ENCODE measurements at regions of chr7 and their contacts with region 1.

Region 1: GRCh38 chr7:76333511-76334101 is 25.2 kb downstream of the YWHAG start:
- DNase-seq: no peak
- H3K4me3 ChIP-seq: no peak overlapping the region
- H3K27ac ChIP-seq: peak overlapping the region; percentile 9 to 10
- H3K4me1 ChIP-seq: peaks cover 17 to 50% (median 42%) of the 10 kb centered on the region in 4 experiments
- H3K27me3 ChIP-seq: no peaks in the 10 kb centered on the region

Region 2: DNA sequence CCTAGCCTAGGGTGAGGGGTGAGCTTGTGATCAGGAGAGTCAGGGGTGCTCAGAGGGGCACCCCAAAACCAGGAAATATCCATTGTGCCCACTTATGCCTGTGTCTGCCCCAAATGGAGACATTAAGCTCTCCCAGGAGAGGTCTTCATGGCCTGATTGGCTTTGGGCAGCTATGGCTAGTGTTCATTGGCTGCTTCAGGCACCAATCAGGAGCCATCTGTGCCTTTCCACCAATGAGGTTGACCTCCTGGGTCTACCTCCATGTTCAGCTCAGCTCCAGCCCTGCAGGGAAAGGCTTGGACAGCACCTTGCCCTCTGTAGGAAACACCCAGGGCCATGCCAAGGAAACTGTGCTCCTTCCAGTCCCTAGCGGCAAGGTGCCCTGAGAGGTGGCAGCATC is 55.1 kb before region 1 on chr7:
- CTCF ChIA-PET with region 1: no interaction called
- POLR2A ChIA-PET with region 1: no interaction called
- DNase-seq: no peak
- H3K4me3 ChIP-seq: no peak overlapping the region
- H3K27ac ChIP-seq: no peak overlapping the region
- H3K4me1 ChIP-seq: peaks cover 0 to 18% (median 15%) of the 10 kb centered on the region in 4 experiments
- H3K27me3 ChIP-seq: peaks cover 0 to 50% (median 19%) of the 10 kb centered on the region in 5 experiments

Region 3: DNA sequence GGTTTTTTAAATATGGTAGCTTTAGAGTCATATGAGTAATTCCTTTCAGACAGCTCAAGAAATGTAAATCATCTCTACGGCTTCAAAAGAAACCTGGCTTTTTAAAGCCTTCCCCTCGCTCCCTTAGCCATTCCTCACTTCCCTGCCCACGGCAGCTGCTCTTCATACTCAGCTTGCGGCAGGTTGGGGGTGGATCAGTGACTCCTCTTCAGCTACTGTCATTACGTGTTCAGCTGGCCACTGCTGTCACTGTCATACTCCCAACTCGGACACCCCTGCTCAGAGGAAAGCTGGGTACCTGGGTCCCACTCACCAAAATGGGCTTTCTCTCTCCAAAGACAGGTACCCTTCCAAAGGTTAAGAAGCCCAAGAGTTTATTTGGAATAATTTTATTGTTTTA is 18.6 kb after region 1 on chr7:
- CTCF ChIA-PET with region 1: interaction called, 74 read pairs
- POLR2A ChIA-PET with region 1: no interaction called
- DNase-seq: no peak
- H3K4me3 ChIP-seq: no peak overlapping the region
- H3K27ac ChIP-seq: no peak overlapping the region
- H3K4me1 ChIP-seq: peaks cover 5 to 13% (median 11%) of the 10 kb centered on the region in 4 experiments
- H3K27me3 ChIP-seq: no peaks in the 10 kb centered on the region

Region 4: GRCh38 chr7:76359111-76359978 is 25.7 kb after region 1 on chr7:
- CTCF ChIA-PET with region 1: interaction called, 74 read pairs
- POLR2A ChIA-PET with region 1: interaction called, 3 read pairs
- DNase-seq: peak; percentile 99
- H3K4me3 ChIP-seq: peak overlapping the region; percentile 90 to 98 (median 97)
- H3K27ac ChIP-seq: peak overlapping the region; percentile 94 to 98
- H3K4me1 ChIP-seq: peaks cover 9 to 40% (median 29%) of the 10 kb centered on the region in 4 experiments
- H3K27me3 ChIP-seq: no peaks in the 10 kb centered on the region